Posterior vena cava (tissue), 2 donors: ENCODE measurements at regions of chr10 and their contacts with region 1.

Region 1: DNA sequence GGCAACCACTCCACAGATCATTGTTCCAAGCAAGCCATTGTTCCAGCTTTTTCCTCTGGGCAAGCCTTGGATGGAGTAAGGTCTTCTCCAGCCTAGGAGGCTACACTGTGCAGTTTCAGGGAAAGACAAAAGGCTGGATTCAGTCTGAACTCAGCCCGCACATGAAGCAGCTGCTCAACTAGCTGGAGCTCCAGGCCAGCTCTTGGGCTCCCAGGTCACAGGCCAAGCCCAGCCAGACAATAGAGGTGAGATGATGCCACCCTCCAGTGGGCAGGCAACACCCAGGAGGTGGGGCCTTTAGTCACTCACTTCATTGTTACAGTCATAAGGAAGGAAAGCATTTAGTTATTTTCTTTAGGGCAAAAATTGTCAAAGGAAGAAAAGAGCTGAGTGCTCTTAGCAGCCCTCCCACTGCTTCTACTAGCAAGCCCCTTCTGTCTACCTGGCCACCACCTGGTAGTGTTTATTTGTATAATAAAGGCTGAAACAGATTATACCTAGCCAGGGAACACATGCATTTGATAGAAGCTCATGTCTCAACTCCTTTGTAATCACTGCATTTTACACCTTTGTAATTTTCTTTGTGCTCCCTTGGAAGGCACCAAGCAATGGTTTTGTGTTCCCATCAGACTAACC is 253.4 kb downstream of the WDR11 start:
- DNase-seq: no peak

Region 2: GRCh38 chr10:120667276-120667675 is 437.3 kb before region 1 on chr10:
- intact Hi-C with region 1: loop called in 1 of 2 experiments (anchors 10 kb)
- DNase-seq: no peak

Region 3: GRCh38 chr10:121448766-121449421 is 344.3 kb after region 1 on chr10:
- intact Hi-C with region 1: no loop called
- DNase-seq: no peak